ENCODE measurements at regions of chr19 and their contacts with region 1.

Region 1: GRCh38 chr19:14073261-14073924 is 807 bp downstream of the MISP3 start:
- DNase-seq: no peak
- H3K4me3 ChIP-seq: peak overlapping the region; percentile 64 to 81 (median 75)
- H3K27ac ChIP-seq: peak overlapping the region; percentile 86 to 94 (median 89)
- H3K4me1 ChIP-seq: peaks cover 25 to 45% (median 43%) of the 10 kb centered on the region in 4 donors
- H3K27me3 ChIP-seq: no peaks in the 10 kb centered on the region
- CTCF ChIP-seq: peak; percentile 37 to 85 (median 67)
- EP300 ChIP-seq: no peak
- POLR2A ChIP-seq: no peak

Region 2: DNA sequence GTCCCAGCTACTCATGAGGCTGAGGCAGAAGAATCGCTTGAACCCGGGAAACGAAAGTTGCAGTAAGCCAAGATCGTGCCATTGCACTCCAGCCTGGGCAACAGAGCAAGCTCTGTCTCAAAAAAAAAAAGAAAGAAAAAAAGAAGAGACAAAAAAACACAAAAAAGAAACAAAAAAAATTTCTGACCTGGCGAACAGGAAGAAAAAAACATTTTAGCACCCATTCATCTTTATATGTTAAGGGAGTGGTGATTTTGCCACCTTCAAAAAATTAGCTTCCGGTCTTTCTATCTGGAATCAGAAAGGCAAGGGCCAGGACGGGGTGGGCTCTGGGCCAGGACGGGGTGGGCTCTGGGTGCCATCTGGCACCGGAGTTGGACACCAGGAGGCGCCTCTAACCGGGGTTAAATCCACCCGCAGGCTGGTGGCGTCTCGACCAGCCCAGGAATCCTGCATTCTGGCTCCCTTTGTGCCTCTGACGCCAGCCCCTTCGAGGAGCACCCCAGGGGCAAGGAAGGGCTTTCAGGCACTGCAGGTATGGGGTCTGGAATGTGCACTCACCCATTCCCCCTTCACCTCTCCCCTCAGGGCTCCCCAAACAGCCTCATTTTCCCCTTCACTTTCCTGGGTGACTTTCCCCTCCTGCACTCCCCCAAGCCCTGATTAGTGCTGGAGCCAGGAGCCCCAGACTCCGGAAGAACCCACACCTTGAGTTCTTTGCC is 288.5 kb before region 1 on chr19:
- intact Hi-C with region 1: loop called (anchors 10 kb)
- DNase-seq: no peak
- H3K4me3 ChIP-seq: peak overlapping the region in 1 of 4 donors; percentile 2
- H3K27ac ChIP-seq: peak overlapping the region in 1 of 4 donors; percentile 38
- H3K4me1 ChIP-seq: peaks cover 22 to 59% (median 51%) of the 10 kb centered on the region in 4 donors
- H3K27me3 ChIP-seq: no peaks in the 10 kb centered on the region
- CTCF ChIP-seq: peak; percentile 69 to 77 (median 72)
- EP300 ChIP-seq: no peak
- POLR2A ChIP-seq: no peak

Region 3: GRCh38 chr19:13880059-13881043 is 193.0 kb before region 1 on chr19:
- intact Hi-C with region 1: loop called (anchors 1 kb)
- DNase-seq: peak; percentile 99
- H3K4me3 ChIP-seq: peak overlapping the region; percentile 36 to 50 (median 42)
- H3K27ac ChIP-seq: peak overlapping the region; percentile 74 to 79 (median 78)
- H3K4me1 ChIP-seq: peaks cover 15 to 32% (median 27%) of the 10 kb centered on the region in 4 donors
- H3K27me3 ChIP-seq: no peaks in the 10 kb centered on the region
- CTCF ChIP-seq: peak; percentile 98 to 100 (median 98)
- EP300 ChIP-seq: no peak
- POLR2A ChIP-seq: no peak

Region 4: DNA sequence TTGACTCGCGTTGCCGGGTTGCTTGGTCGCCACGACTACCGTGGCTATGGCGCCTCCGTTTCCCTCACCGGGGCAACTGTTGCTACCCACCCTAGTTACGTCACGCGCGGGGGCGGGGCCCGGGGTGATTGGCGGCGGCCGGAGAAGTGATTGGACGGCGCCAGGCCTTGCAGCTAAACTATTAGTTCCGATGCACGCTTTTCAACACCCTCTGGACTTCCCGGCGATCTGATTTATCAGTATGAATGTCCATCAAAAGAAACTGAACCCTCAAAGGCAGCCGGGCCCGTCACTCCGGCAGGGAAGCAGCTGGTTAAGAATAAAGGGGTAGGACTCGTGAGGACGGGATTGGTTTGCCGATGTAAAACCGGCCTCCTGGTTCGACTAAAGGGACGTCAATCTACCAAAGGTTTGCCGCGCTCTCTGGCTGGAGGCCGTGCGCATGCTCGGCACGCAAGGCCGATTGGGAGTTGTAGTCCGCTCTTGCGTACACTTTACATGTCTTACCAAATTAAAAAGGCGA is 67.1 kb before region 1 on chr19 and contains the start of gene RFX1:
- intact Hi-C with region 1: loop called (anchors 2 kb)
- DNase-seq: peak; percentile 100
- H3K4me3 ChIP-seq: peak within 1 kb of the TSS; percentile 78 to 98 (median 86)
- H3K27ac ChIP-seq: peak within 1 kb of the TSS; percentile 97 to 100 (median 99)
- H3K4me1 ChIP-seq: peaks cover 23 to 41% (median 38%) of the 10 kb centered on the region in 4 donors
- H3K27me3 ChIP-seq: no peaks in the 10 kb centered on the region
- CTCF ChIP-seq: peak in 1 of 3 experiments; percentile 44
- EP300 ChIP-seq: no peak
- POLR2A ChIP-seq: no peak
- total RNA-seq, gene RFX1: 2.9 to 8.9 (median 4.5) TPM

Region 5: GRCh38 chr19:14117668-14118164 is 44.3 kb after region 1 on chr19 and contains the start of gene PRKACA:
- intact Hi-C with region 1: loop called (anchors 2 kb)
- DNase-seq: peak; percentile 99
- H3K4me3 ChIP-seq: peak within 1 kb of the TSS; percentile 86 to 98 (median 97)
- H3K27ac ChIP-seq: peak within 1 kb of the TSS; percentile 98 to 100 (median 100)
- H3K4me1 ChIP-seq: peaks cover 58 to 67% (median 63%) of the 10 kb centered on the region in 4 donors
- H3K27me3 ChIP-seq: no peaks in the 10 kb centered on the region
- CTCF ChIP-seq: no peak
- EP300 ChIP-seq: no peak
- POLR2A ChIP-seq: no peak
- total RNA-seq, gene PRKACA: 76.0 to 125 (median 93.3) TPM

Region 6: DNA sequence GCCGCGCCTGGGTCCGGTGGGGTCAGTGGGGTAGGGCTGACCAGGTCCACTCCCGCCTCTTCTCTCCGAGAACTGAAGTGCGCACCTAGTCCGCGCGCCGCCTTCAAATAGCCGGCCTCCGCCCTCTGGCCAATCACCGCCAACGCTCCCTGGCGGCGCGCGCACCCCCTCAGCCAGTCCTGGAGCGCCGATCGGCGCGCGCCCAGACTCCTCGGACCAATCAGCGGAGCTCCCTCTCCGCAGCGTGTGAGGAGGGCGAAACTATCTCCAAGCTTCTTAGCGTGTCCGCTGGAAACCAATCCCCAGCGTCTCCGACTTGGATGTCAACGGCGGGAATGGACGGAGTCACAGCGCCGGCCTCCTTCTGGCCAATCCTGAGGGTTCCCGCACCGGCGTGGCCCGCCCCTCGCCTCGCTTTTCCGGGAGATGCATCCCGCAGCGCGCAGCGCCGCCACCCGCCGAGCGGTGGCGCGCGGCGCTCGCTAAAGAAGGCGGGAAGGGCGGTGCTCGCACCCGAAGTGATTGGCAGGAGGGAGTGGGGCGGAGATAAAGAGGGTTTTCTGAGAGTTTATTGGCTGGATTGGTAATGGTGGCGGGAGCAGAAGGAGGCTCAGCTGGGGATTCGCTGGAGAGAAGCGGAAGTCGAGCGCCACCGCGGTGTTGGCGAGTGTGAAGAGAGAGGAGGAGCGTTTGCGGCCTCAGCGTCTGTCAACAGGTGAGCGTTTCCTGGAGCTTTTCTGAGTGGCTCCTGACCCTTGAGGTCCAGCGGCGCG is 63.3 kb after region 1 on chr19 and contains the start of gene ASF1B:
- intact Hi-C with region 1: loop called (anchors 5 kb)
- DNase-seq: peak; percentile 100
- H3K4me3 ChIP-seq: peak within 1 kb of the TSS; percentile 64 to 77 (median 75)
- H3K27ac ChIP-seq: peak within 1 kb of the TSS; percentile 88 to 98 (median 94)
- H3K4me1 ChIP-seq: peaks cover 26 to 35% (median 33%) of the 10 kb centered on the region in 4 donors
- H3K27me3 ChIP-seq: no peaks in the 10 kb centered on the region
- CTCF ChIP-seq: peak; percentile 74 to 100 (median 90)
- EP300 ChIP-seq: no peak
- POLR2A ChIP-seq: no peak
- total RNA-seq, gene ASF1B: 0.63 to 1.3 (median 0.65) TPM in 3 of 4 donors, not detected in the other

Measured in esophagus muscularis mucosa (tissue), 4 donors.